ENCODE measurements at regions of chr4 and their contacts with region 1.

Region 1: DNA sequence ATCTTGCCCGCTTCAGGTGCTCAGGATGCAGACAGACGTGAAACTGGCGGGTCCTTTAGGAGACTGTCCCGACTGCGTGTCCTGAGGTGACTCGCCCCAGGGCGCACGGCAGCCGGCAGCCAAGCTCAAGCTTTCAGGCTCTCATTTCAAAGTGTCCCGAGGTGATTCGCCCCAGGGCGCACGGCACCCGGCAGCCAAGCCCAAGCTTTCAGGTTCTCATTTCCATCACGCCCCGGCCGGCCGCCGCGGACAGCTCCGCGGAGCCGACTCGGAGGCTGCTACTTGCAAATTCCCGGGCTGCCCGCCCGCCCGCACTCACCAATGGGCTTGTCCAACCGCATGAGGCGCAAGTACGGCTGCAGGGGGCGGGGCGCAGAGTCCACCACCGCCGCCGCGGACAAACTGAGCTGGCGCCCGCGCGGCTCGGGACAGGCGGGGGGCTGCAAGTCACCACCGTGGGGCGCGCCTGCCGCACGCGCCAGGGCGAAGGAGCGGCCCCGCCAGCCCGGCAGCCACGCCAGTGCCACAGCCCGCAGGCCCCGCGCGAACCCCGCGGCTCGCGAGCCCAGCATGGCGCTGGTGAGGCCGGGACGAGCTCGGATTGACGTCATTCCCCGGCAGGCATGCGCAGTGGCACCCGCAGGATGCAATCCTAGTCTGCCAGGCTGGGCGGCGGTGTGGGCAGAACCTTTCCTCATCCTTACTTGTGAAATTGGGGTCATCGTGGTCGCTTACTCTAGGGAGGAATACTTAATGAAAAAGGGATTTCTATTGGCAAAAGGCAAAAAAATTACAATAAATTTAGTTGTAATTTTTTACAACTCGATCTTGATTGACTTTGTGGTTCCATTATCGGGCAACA is at the start of gene COQ2:
- DNase-seq: peak; percentile 87 to 96 (median 91)
- ATAC-seq: peak; percentile 91
- H3K4me3 ChIP-seq: peak within 1 kb of the TSS; percentile 96
- H3K4me3 Mint-ChIP-seq: peak within 1 kb of the TSS; percentile 80 to 99 (median 97)
- H3K27ac ChIP-seq: peak within 1 kb of the TSS; percentile 88
- H3K27ac Mint-ChIP-seq: peak within 1 kb of the TSS; percentile 88 to 99 (median 97)
- H3K4me1 ChIP-seq: peaks cover 5 to 8% of the 10 kb centered on the region in 2 donors
- H3K4me1 Mint-ChIP-seq: peaks cover 21 to 47% (median 38%) of the 10 kb centered on the region in 7 donors
- H3K27me3 ChIP-seq: no peaks in the 10 kb centered on the region
- H3K27me3 Mint-ChIP-seq: peaks cover 0 to 3% (median 0%) of the 10 kb centered on the region in 5 donors
- total RNA-seq, gene COQ2: 7.2 to 12.7 (median 10.2) TPM

Region 2: GRCh38 chr4:82428969-82429727 is 855.3 kb before region 1 on chr4:
- CTCF ChIA-PET with region 1: no interaction called
- POLR2A ChIA-PET with region 1: interaction called, 4 read pairs
- intact Hi-C with region 1: loop called (anchors 1 to 10 kb)
- DNase-seq: peak; percentile 90 to 99 (median 94)
- ATAC-seq: peak; percentile 79
- H3K4me3 ChIP-seq: peak overlapping the region; percentile 96
- H3K4me3 Mint-ChIP-seq: peak overlapping the region; percentile 98 to 100 (median 99)
- H3K27ac ChIP-seq: peak overlapping the region; percentile 99
- H3K27ac Mint-ChIP-seq: peak overlapping the region; percentile 98 to 100 (median 99)
- H3K4me1 ChIP-seq: peaks cover 28 to 39% of the 10 kb centered on the region in 2 donors
- H3K4me1 Mint-ChIP-seq: peaks cover 40 to 81% (median 69%) of the 10 kb centered on the region in 7 donors
- H3K27me3 ChIP-seq: no peaks in the 10 kb centered on the region
- H3K27me3 Mint-ChIP-seq: peaks cover 0 to 2% (median 0%) of the 10 kb centered on the region in 5 donors

Region 3: DNA sequence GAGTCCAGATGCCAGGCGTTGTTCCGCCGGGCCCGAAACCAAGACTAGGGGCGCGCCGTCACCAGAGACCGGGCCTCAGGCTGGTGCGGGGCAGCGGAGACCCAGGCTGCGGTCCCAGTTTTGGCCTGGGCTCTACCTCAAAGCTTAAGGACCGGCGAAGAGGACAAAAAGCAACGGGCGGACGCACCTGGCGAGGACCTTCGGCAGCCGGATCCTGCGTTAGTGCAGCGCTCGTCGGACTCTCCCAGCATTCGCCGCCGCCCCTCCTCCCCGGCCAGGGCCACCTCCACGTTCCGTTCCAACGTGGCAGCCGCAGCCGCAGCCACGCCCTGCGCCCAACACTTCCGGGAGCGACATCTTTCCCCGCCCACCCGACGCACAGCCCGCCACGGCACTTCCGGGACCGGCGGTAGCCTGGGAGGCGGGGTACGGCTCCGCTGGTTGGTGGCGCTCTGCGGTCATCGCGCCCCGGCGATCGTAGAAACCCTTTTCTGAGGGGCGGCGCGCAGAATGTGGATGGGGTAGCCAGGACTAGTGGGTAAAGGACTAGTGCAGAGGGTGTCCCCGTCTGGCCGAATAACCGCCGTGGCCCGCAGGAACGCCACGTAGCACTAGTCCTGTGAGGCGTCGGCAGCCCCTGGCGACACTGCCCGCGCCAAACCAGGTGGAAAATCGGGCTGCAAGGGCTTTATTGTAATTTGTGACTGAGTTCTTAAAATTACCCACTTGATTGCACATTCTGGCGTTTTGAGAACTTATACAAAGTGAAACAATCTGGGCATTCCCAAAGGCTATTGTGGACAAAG is 393.3 kb before region 1 on chr4 and contains the start of gene SEC31A:
- CTCF ChIA-PET with region 1: no interaction called
- POLR2A ChIA-PET with region 1: interaction called, 3 read pairs
- intact Hi-C with region 1: loop called in 1 of 2 experiments (anchors 2 kb)
- DNase-seq: peak; percentile 89 to 98 (median 95)
- ATAC-seq: peak; percentile 97
- H3K4me3 ChIP-seq: peak within 1 kb of the TSS; percentile 96
- H3K4me3 Mint-ChIP-seq: peak within 1 kb of the TSS; percentile 86 to 96 (median 93)
- H3K27ac ChIP-seq: peak within 1 kb of the TSS; percentile 99
- H3K27ac Mint-ChIP-seq: peak within 1 kb of the TSS; percentile 92 to 99 (median 97)
- H3K4me1 ChIP-seq: peaks cover 11 to 12% of the 10 kb centered on the region in 2 donors
- H3K4me1 Mint-ChIP-seq: peaks cover 18 to 51% (median 41%) of the 10 kb centered on the region in 7 donors
- H3K27me3 ChIP-seq: no peaks in the 10 kb centered on the region
- H3K27me3 Mint-ChIP-seq: no peaks in the 10 kb centered on the region
- total RNA-seq, gene SEC31A: 137 to 168 (median 149) TPM

Region 4: GRCh38 chr4:83054928-83055327 is 229.5 kb before region 1 on chr4:
- CTCF ChIA-PET with region 1: interaction called, 9 read pairs
- POLR2A ChIA-PET with region 1: interaction called, 3 read pairs
- intact Hi-C with region 1: loop called (anchors 1 kb)
- DNase-seq: peak in 6 of 9 donors; percentile 12 to 40 (median 30)
- ATAC-seq: no peak
- H3K4me3 ChIP-seq: no peak overlapping the region
- H3K4me3 Mint-ChIP-seq: no peak overlapping the region
- H3K27ac ChIP-seq: no peak overlapping the region
- H3K27ac Mint-ChIP-seq: no peak overlapping the region
- H3K4me1 ChIP-seq: no peaks in the 10 kb centered on the region
- H3K4me1 Mint-ChIP-seq: peaks cover 0 to 9% (median 0%) of the 10 kb centered on the region in 7 donors
- H3K27me3 ChIP-seq: no peaks in the 10 kb centered on the region
- H3K27me3 Mint-ChIP-seq: no peaks in the 10 kb centered on the region

Region 5: GRCh38 chr4:83217721-83218522 is 66.5 kb before region 1 on chr4:
- CTCF ChIA-PET with region 1: no interaction called
- POLR2A ChIA-PET with region 1: no interaction called
- intact Hi-C with region 1: loop called in 1 of 2 experiments (anchors 2 kb)
- DNase-seq: peak in 8 of 9 donors; percentile 52 to 91 (median 84)
- ATAC-seq: peak; percentile 95
- H3K4me3 ChIP-seq: peak overlapping the region; percentile 23
- H3K4me3 Mint-ChIP-seq: peak overlapping the region; percentile 57 to 84 (median 72)
- H3K27ac ChIP-seq: peak overlapping the region; percentile 78
- H3K27ac Mint-ChIP-seq: peak overlapping the region; percentile 88 to 96 (median 92)
- H3K4me1 ChIP-seq: peaks cover 65 to 77% of the 10 kb centered on the region in 2 donors
- H3K4me1 Mint-ChIP-seq: peaks cover 56 to 83% (median 74%) of the 10 kb centered on the region in 7 donors
- H3K27me3 ChIP-seq: no peaks in the 10 kb centered on the region
- H3K27me3 Mint-ChIP-seq: no peaks in the 10 kb centered on the region

Region 6: GRCh38 chr4:83353516-83353915 is 69.1 kb after region 1 on chr4:
- CTCF ChIA-PET with region 1: no interaction called
- POLR2A ChIA-PET with region 1: no interaction called
- intact Hi-C with region 1: loop called in 1 of 2 experiments (anchors 5 kb)
- DNase-seq: no peak
- ATAC-seq: no peak
- H3K4me3 ChIP-seq: no peak overlapping the region
- H3K4me3 Mint-ChIP-seq: no peak overlapping the region
- H3K27ac ChIP-seq: no peak overlapping the region
- H3K27ac Mint-ChIP-seq: no peak overlapping the region
- H3K4me1 ChIP-seq: peaks cover 0 to 7% of the 10 kb centered on the region in 2 donors
- H3K4me1 Mint-ChIP-seq: peaks cover 7 to 32% (median 10%) of the 10 kb centered on the region in 7 donors
- H3K27me3 ChIP-seq: no peaks in the 10 kb centered on the region
- H3K27me3 Mint-ChIP-seq: no peaks in the 10 kb centered on the region

Region 7: GRCh38 chr4:83484500-83485461 is 200.4 kb after region 1 on chr4 and contains the start of gene ABRAXAS1:
- CTCF ChIA-PET with region 1: no interaction called
- POLR2A ChIA-PET with region 1: no interaction called
- intact Hi-C with region 1: loop called (anchors 1 kb)
- DNase-seq: peak; percentile 91 to 97 (median 96)
- ATAC-seq: peak; percentile 98
- H3K4me3 ChIP-seq: peak within 1 kb of the TSS; percentile 93
- H3K4me3 Mint-ChIP-seq: peak within 1 kb of the TSS; percentile 92 to 99 (median 98)
- H3K27ac ChIP-seq: peak within 1 kb of the TSS; percentile 86
- H3K27ac Mint-ChIP-seq: peak within 1 kb of the TSS; percentile 93 to 99 (median 98)
- H3K4me1 ChIP-seq: peaks cover 4 to 11% of the 10 kb centered on the region in 2 donors
- H3K4me1 Mint-ChIP-seq: peaks cover 15 to 49% (median 36%) of the 10 kb centered on the region in 7 donors
- H3K27me3 ChIP-seq: no peaks in the 10 kb centered on the region
- H3K27me3 Mint-ChIP-seq: peaks cover 0 to under 1% (median 0%) of the 10 kb centered on the region in 5 donors
- total RNA-seq, gene ABRAXAS1: 13.9 to 47.6 (median 24.9) TPM